Ovary (tissue), 10 donors: ENCODE measurements at regions of chr6 and their contacts with region 1.

Region 1: GRCh38 chr6:3732345-3733141 is 19.0 kb downstream of the PXDC1 start:
- DNase-seq: peak; percentile 66 to 86 (median 77)
- H3K4me3 ChIP-seq: no peak overlapping the region
- H3K27ac ChIP-seq: no peak overlapping the region
- H3K4me1 ChIP-seq: no peaks in the 10 kb centered on the region
- H3K27me3 ChIP-seq: no peaks in the 10 kb centered on the region
- CTCF ChIP-seq: peak; percentile 69 to 76 (median 69)
- EP300 ChIP-seq: no peak
- POLR2A ChIP-seq: no peak

Region 2: GRCh38 chr6:3124667-3125066 is 607.9 kb before region 1 on chr6:
- intact Hi-C with region 1: loop called in 1 of 4 experiments (anchors 5 kb)
- DNase-seq: no peak
- H3K4me3 ChIP-seq: no peak overlapping the region
- H3K27ac ChIP-seq: no peak overlapping the region
- H3K4me1 ChIP-seq: no peaks in the 10 kb centered on the region
- H3K27me3 ChIP-seq: no peaks in the 10 kb centered on the region
- CTCF ChIP-seq: no peak
- EP300 ChIP-seq: no peak
- POLR2A ChIP-seq: no peak

Region 3: GRCh38 chr6:3281631-3282475 is 450.7 kb before region 1 on chr6:
- intact Hi-C with region 1: loop called (anchors 2 to 5 kb)
- DNase-seq: peak in 4 of 5 donors; percentile 14 to 37 (median 24)
- H3K4me3 ChIP-seq: no peak overlapping the region
- H3K27ac ChIP-seq: no peak overlapping the region
- H3K4me1 ChIP-seq: no peaks in the 10 kb centered on the region
- H3K27me3 ChIP-seq: no peaks in the 10 kb centered on the region
- CTCF ChIP-seq: no peak
- EP300 ChIP-seq: no peak
- POLR2A ChIP-seq: no peak

Region 4: DNA sequence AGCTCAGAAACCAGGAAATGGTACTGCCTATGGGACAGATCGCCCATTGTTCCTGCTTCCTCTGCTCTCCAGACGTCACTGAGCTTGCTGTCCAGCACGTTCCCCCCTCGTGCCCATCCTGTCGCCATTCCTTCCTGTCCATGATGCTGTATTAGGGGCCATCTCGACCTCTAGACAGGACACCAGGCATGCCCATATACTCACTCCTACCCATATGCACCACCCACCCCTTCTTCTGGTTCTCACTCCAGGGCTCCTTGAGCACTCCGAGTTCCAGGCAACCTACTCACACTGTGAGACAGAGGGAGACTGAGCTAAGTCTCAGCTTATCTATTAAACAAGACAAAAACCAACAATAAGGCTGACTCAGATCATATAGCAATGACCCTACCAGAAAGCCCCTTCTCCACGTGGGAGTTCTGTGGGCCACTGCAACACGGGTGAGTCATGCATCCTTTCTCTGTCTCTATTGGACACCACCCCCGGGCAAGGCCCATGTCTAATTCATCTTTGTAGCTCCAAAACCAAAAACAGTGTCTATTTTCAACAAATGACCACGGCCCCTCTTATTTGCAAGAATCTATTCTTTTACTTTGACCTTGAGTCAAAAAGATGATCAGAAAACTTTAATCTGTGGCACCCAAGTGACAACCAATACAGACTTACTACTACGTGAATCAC is 408.1 kb before region 1 on chr6:
- intact Hi-C with region 1: no loop called
- DNase-seq: no peak
- H3K4me3 ChIP-seq: no peak overlapping the region
- H3K27ac ChIP-seq: no peak overlapping the region
- H3K4me1 ChIP-seq: no peaks in the 10 kb centered on the region
- H3K27me3 ChIP-seq: no peaks in the 10 kb centered on the region
- CTCF ChIP-seq: no peak
- EP300 ChIP-seq: no peak
- POLR2A ChIP-seq: no peak

Region 5: DNA sequence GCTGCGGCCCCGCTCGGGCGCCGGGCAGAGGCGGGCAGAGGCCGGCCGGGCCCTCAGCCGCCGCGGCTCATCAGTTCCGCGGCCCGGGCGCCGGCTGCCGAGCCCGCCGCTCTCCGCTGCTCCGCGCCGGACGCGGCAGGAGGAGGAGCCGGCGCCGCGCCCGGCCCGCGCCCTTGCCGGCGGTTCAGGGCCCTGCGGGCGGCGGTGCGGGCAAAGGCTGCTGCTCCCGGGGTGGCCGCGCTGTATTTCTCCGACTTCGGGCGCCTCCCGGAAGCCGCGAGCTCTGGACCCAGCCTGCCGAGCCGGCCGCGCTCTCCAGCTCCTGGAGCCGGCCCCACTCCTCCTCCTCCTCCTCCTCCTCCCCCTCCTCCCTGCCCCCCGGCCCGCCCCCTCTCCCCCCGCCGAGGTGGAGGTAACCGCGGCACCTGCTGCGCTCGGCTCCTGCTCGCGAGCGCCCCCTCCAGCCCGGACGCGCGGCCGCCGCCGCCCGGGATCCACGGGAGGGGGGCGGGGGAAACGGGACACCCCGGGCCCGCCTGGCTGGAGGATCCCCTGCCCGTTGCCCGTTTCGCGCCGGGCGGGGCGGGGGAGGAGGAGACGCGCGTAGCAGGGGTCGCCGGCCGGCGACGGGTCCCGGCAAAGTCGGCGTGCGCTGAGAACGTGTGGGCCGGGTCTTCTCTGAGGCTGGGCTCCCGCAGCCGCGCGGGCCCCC is 275.6 kb before region 1 on chr6 and contains the start of gene SLC22A23:
- intact Hi-C with region 1: loop called in 3 of 4 experiments (anchors 5 to 10 kb)
- DNase-seq: peak; percentile 69 to 83 (median 77)
- H3K4me3 ChIP-seq: peak within 1 kb of the TSS; percentile 49
- H3K27ac ChIP-seq: peak within 1 kb of the TSS; percentile 41 to 56
- H3K4me1 ChIP-seq: peaks cover 8% of the 10 kb centered on the region
- H3K27me3 ChIP-seq: no peaks in the 10 kb centered on the region
- CTCF ChIP-seq: peak; percentile 30 to 66 (median 62)
- EP300 ChIP-seq: no peak
- POLR2A ChIP-seq: no peak
- total RNA-seq, gene SLC22A23: 3.7 to 31.0 (median 6.9) TPM

Region 6: DNA sequence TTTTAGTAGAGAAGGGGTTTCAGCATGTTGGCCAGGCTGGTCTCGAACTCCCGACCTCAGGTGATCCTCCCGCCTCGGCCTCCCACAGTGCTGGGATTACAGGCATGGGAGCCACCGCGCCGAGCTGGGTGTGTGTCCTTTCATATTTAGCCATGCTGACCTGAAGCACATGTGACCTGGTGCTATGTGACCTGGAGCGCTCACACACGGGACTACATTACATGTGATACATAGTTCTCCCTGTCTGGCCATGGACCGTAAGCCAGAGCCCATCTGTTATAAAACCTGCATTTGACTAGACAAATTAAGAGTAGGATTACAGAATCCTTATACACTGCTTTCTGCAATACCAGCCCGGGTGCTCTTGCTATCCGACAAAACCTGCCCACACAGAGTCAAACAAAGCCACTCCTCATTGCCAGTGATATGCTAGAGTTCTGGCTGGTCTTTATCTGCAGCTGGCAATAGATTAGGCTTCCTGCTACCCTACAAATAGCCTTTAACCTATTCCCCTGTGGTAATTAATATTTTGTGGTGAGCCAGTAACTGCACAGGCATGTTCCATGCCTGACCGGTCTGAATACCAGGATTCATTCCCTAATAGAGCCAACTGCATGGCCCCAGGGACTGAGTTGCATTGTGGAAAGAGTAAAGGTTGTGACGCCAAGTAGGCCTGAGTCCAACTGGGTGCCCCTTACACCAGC is 90.4 kb after region 1 on chr6:
- intact Hi-C with region 1: no loop called
- DNase-seq: no peak
- H3K4me3 ChIP-seq: no peak overlapping the region
- H3K27ac ChIP-seq: no peak overlapping the region
- H3K4me1 ChIP-seq: peaks cover 7% of the 10 kb centered on the region
- H3K27me3 ChIP-seq: no peaks in the 10 kb centered on the region
- CTCF ChIP-seq: no peak
- EP300 ChIP-seq: no peak
- POLR2A ChIP-seq: no peak

Region 7: GRCh38 chr6:4018172-4018905 is 285.8 kb after region 1 on chr6:
- intact Hi-C with region 1: loop called in 1 of 4 experiments (anchors 10 kb)
- DNase-seq: peak; percentile 95 to 96 (median 96)
- H3K4me3 ChIP-seq: peak overlapping the region; percentile 78
- H3K27ac ChIP-seq: peak overlapping the region; percentile 91 to 95
- H3K4me1 ChIP-seq: peaks cover 3% of the 10 kb centered on the region
- H3K27me3 ChIP-seq: no peaks in the 10 kb centered on the region
- CTCF ChIP-seq: peak in 2 of 3 donors; percentile 67 to 74
- EP300 ChIP-seq: no peak
- POLR2A ChIP-seq: peak; percentile 90

Region 8: GRCh38 chr6:4135665-4136353 is 403.3 kb after region 1 on chr6:
- intact Hi-C with region 1: loop called in 1 of 4 experiments (anchors 10 kb)
- DNase-seq: peak; percentile 98 to 99 (median 99)
- H3K4me3 ChIP-seq: peak overlapping the region; percentile 73
- H3K27ac ChIP-seq: peak overlapping the region; percentile 61 to 81
- H3K4me1 ChIP-seq: peaks cover 5% of the 10 kb centered on the region
- H3K27me3 ChIP-seq: no peaks in the 10 kb centered on the region
- CTCF ChIP-seq: no peak
- EP300 ChIP-seq: no peak
- POLR2A ChIP-seq: no peak